ENCODE measurements at regions of chr3 and their contacts with region 1.

Region 1: GRCh38 chr3:25508901-25509300 is 80.8 kb downstream of the RARB start:
- DNase-seq: no peak
- ATAC-seq: peak; percentile 4 to 58 (median 46)
- H3K4me3 ChIP-seq: no peak overlapping the region
- H3K27ac ChIP-seq: peak overlapping the region; percentile 66
- H3K4me1 ChIP-seq: peaks cover 39% of the 10 kb centered on the region
- H3K27me3 ChIP-seq: no peaks in the 10 kb centered on the region
- CTCF ChIP-seq: no peak

Region 2: DNA sequence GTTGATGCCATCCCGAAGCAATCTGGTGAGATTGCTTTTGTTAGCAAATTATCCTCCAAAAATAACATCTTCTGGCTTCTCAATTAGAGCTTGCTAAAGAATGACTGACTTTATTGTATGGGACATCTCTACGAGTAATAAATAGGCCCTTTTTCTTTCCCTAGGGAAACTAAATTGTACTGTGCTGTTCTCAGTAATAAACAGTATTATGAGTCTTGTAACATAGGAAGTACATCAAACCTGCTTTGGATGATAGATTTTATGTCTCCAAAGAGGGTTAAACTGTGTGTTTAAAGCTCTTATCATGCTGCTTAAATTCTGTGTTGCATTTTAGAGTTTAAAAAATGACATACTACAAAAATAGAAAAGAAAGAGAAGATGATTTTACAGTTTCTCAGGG is 860.8 kb before region 1 on chr3:
- intact Hi-C with region 1: no loop called
- DNase-seq: no peak
- ATAC-seq: no peak
- H3K4me3 ChIP-seq: no peak overlapping the region
- H3K27ac ChIP-seq: no peak overlapping the region
- H3K4me1 ChIP-seq: peaks cover 5% of the 10 kb centered on the region
- H3K27me3 ChIP-seq: no peaks in the 10 kb centered on the region
- CTCF ChIP-seq: no peak

Region 3: DNA sequence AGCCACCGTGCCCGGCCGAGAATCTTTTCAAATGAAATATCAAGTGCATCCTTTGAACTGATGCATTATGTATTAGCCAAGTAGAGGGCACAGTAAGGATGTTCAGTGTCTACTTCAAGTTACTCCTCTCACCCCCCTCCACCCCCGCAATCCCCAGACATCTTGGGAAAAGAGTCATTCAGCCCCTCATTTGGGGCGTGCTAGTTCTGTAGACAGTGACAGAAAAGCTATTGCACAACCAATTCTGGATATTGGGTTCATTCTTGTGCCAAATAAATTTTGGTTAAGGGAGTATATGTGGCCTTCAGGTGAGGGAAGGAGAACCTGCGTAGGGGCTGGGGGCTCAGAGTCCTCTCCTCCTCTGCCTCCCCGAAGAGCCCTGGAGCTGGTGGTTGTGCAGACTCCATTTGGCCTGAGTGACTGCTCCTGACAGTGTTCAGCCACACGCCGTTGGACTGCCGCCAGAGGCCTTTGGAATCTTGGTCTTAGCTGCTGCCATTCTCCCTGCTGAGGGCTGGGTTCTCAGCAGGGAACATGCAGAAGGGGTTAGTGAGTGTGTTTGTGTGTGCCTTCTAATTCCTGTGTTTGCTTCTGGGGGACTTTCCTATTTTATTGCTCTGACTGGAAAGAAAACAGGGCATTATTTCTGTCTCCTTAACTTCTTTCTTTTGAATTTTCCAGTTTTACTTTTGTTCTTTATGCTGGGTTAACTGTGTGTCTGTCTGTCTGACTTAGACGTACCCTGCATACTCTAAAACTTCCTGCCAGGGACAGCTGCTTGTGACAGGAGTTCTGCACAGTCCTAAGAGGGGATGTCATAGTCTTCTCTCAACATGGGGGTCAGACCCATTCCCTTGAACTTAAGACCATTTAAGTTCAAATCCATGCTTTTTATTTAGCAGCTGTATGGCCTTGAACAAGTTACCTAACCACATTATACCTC is 59.9 kb before region 1 on chr3:
- intact Hi-C with region 1: loop called in 1 of 2 experiments (anchors 5 kb)
- DNase-seq: peak; percentile 85 to 94
- ATAC-seq: peak; percentile 84 to 94 (median 90)
- H3K4me3 ChIP-seq: no peak overlapping the region
- H3K27ac ChIP-seq: peak overlapping the region; percentile 74
- H3K4me1 ChIP-seq: peaks cover 36% of the 10 kb centered on the region
- H3K27me3 ChIP-seq: no peaks in the 10 kb centered on the region
- CTCF ChIP-seq: no peak

Region 4: DNA sequence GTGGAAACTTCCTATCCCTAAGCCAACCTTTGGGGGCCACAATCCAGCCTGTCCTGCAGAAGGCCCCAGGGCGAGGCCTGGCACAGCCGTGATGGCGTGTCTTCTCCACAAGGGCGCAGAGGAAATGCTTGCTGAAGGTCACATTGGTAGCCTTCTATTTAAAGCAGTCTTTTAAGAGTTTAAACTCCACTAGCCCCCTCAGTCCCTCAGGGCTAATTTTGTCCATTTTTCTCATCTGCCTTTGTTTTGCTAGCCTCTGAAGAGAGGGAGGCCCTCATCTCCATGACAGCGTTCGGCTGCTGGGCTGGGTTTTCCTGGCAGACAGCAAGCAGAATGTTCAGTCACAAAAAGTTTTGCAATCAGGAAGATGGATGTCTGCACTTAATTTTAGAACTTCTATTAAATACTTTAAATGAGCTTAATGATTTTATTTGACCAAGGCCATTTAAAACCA is 40.0 kb before region 1 on chr3:
- intact Hi-C with region 1: loop called (anchors 5 kb)
- DNase-seq: peak; percentile 62 to 85
- ATAC-seq: peak; percentile 26 to 76 (median 67)
- H3K4me3 ChIP-seq: peak overlapping the region; percentile 13
- H3K27ac ChIP-seq: peak overlapping the region; percentile 77
- H3K4me1 ChIP-seq: peaks cover 71% of the 10 kb centered on the region
- H3K27me3 ChIP-seq: no peaks in the 10 kb centered on the region
- CTCF ChIP-seq: peak; percentile 37

Measured in psoas muscle (tissue), 8 donors.